ENCODE measurements at regions of chr6 and their contacts with region 1.

Region 1: GRCh38 chr6:107928984-107929383 is 29.0 kb downstream of the SEC63 start:
- DNase-seq: no peak
- ATAC-seq: no peak
- H3K4me3 ChIP-seq: no peak overlapping the region
- H3K27ac ChIP-seq: no peak overlapping the region
- H3K4me1 ChIP-seq: peaks cover 5% of the 10 kb centered on the region; the same call in 1 of the 2 replicates
- H3K27me3 ChIP-seq: no peaks in the 10 kb centered on the region
- CTCF ChIP-seq: no peak

Region 2: DNA sequence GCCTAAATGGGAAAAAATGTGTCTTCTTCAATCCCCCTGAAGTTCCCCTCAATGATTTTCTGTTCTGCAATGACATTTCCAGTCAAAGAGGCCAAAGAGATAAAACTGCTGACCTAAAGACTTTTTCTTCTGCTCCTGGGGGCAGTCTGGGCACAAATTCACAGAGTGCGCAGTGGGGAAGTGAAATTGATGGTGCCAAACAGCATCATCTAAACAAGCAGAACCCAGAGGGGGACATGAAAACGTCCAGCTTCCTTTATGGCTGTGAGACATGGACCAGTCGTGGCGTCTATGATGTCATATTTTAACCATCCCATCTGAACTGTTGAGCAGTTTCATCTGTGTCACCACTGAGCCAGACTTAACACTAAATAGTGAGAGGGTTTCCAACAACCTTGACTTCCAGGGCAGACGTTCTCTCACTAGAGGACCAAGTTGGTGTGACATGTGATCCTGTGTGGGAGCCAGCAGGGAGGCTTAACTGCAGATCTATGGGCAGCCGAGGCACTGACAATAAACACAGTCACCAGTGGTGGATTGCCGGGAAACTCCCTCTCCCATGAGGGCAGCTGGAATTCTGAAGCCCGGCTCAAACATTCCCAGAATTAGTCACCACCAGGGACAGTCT is 117.3 kb before region 1 on chr6:
- CTCF ChIA-PET with region 1: no interaction called
- POLR2A ChIA-PET with region 1: no interaction called
- intact Hi-C with region 1: no loop called
- DNase-seq: peak; percentile 5
- ATAC-seq: no peak
- H3K4me3 ChIP-seq: no peak overlapping the region
- H3K27ac ChIP-seq: no peak overlapping the region
- H3K4me1 ChIP-seq: no peaks in the 10 kb centered on the region
- H3K27me3 ChIP-seq: peaks cover 41% of the 10 kb centered on the region
- CTCF ChIP-seq: no peak

Region 3: GRCh38 chr6:107911692-107912091 is 17.3 kb before region 1 on chr6:
- CTCF ChIA-PET with region 1: no interaction called
- POLR2A ChIA-PET with region 1: no interaction called
- intact Hi-C with region 1: loop called (anchors 1 kb)
- DNase-seq: no peak
- ATAC-seq: no peak
- H3K4me3 ChIP-seq: no peak overlapping the region
- H3K27ac ChIP-seq: no peak overlapping the region
- H3K4me1 ChIP-seq: no peaks in the 10 kb centered on the region
- H3K27me3 ChIP-seq: no peaks in the 10 kb centered on the region
- CTCF ChIP-seq: no peak

Region 4: GRCh38 chr6:108268845-108269244 is 339.9 kb after region 1 on chr6:
- CTCF ChIA-PET with region 1: no interaction called
- POLR2A ChIA-PET with region 1: no interaction called
- intact Hi-C with region 1: no loop called
- DNase-seq: peak; percentile 33
- ATAC-seq: peak; percentile 59
- H3K4me3 ChIP-seq: no peak overlapping the region
- H3K27ac ChIP-seq: no peak overlapping the region
- H3K4me1 ChIP-seq: no peaks in the 10 kb centered on the region
- H3K27me3 ChIP-seq: no peaks in the 10 kb centered on the region
- CTCF ChIP-seq: no peak

Measured in PC-3 (cell line).